Activated T-helper 1 cell treated with anti-CD3 and anti-CD28 coated beads, Interleukin-12 subunit alpha, Interleukin-12 subunit beta, Interleukin-2, Interleukin-4 antibody, amounts not matched to agents 30 ng/mL and 10 ng/mL and 1 ng/mL, durations not matched to agents 14 hours and 24 hours and 36 hours (primary cell): ENCODE measurements at regions of chr9 and their contacts with region 1.

Region 1: GRCh38 chr9:19048966-19049916 is at the start of gene RRAGA:
- DNase-seq: peak; percentile 92
- H3K4me3 Mint-ChIP-seq: peak within 1 kb of the TSS; percentile 96
- H3K27ac Mint-ChIP-seq: peak within 1 kb of the TSS; percentile 99
- H3K4me1 Mint-ChIP-seq: peaks cover 43% of the 10 kb centered on the region
- H3K27me3 Mint-ChIP-seq: peaks cover under 1% of the 10 kb centered on the region
- total RNA-seq, gene RRAGA: 56.8 and 56.9 TPM in 2 replicates

Region 2: DNA sequence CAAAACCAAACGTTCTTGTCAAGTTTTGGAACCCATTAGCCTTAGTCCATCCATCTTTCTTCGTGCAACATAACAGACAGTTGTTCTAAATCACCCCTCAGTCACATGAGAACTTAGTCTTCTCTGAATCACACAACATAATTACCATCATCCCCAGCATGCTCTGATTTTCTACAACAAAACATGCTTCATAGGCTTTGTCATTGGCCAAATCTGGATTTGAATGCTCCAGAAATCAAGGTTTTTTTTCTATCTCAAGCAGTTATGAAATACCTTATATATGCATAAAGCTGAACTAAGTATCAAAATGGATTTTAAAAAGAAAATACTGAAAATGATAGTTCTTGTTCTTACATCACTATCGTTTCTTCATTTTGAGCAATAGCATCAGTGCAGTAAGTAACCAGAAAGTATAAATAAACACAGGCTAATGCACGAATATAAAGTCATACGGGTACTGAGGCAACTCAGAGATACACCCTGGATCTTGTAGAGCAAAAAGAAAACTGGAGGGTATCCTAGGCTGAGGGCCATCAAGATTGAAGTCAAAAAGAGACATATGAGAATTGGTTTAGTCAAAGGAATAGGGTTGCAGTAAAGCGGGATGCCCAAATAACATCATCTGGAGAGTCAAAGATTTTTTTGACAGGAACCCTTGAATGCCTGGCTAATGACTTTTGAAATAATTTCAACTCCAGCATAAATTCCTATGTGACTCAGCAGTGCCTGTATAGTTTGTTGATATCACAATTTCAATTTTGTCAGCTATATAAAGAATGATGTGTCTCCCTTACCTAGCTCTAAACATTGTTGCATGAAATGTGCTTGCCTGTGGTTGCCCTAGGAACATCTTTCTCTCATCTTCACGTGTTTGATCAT is 410.6 kb before region 1 on chr9:
- intact Hi-C with region 1: no loop called
- DNase-seq: no peak
- H3K4me3 Mint-ChIP-seq: no peak overlapping the region
- H3K27ac Mint-ChIP-seq: no peak overlapping the region
- H3K4me1 Mint-ChIP-seq: no peaks in the 10 kb centered on the region
- H3K27me3 Mint-ChIP-seq: no peaks in the 10 kb centered on the region

Region 3: DNA sequence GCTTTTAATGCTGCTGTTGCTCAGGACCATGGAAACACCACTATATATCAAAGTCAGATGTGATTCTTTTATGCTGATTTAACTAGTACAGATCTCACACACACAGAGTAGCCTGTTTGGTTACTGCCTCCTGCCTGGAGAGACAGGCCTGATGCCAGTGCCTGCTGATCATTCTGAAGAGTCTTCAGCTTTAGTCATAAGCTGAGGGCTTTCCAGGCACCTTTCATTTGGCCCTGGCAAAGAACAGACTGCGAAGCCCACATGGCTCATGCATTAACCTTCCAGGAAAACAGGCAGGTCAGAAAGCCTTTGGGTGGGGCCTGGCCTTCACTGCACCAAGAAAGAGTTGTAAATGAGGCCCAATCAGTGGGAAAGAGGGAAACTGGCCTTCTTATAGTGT is 161.0 kb before region 1 on chr9:
- intact Hi-C with region 1: no loop called
- DNase-seq: no peak
- H3K4me3 Mint-ChIP-seq: no peak overlapping the region
- H3K27ac Mint-ChIP-seq: no peak overlapping the region
- H3K4me1 Mint-ChIP-seq: peaks cover 8% of the 10 kb centered on the region
- H3K27me3 Mint-ChIP-seq: peaks cover 8% of the 10 kb centered on the region

Region 4: GRCh38 chr9:19036611-19037010 is 12.6 kb before region 1 on chr9:
- intact Hi-C with region 1: no loop called
- DNase-seq: no peak
- H3K4me3 Mint-ChIP-seq: no peak overlapping the region
- H3K27ac Mint-ChIP-seq: no peak overlapping the region
- H3K4me1 Mint-ChIP-seq: no peaks in the 10 kb centered on the region
- H3K27me3 Mint-ChIP-seq: peaks cover 5% of the 10 kb centered on the region

Region 5: GRCh38 chr9:19102631-19103345 is 53.5 kb after region 1 on chr9 and contains the start of gene HAUS6:
- intact Hi-C with region 1: loop called (anchors 1 kb)
- DNase-seq: peak; percentile 92
- H3K4me3 Mint-ChIP-seq: peak within 1 kb of the TSS; percentile 94
- H3K27ac Mint-ChIP-seq: peak within 1 kb of the TSS; percentile 96
- H3K4me1 Mint-ChIP-seq: peaks cover 16% of the 10 kb centered on the region
- H3K27me3 Mint-ChIP-seq: no peaks in the 10 kb centered on the region
- total RNA-seq, gene HAUS6: 31.8 and 31.9 TPM in 2 replicates

Region 6: DNA sequence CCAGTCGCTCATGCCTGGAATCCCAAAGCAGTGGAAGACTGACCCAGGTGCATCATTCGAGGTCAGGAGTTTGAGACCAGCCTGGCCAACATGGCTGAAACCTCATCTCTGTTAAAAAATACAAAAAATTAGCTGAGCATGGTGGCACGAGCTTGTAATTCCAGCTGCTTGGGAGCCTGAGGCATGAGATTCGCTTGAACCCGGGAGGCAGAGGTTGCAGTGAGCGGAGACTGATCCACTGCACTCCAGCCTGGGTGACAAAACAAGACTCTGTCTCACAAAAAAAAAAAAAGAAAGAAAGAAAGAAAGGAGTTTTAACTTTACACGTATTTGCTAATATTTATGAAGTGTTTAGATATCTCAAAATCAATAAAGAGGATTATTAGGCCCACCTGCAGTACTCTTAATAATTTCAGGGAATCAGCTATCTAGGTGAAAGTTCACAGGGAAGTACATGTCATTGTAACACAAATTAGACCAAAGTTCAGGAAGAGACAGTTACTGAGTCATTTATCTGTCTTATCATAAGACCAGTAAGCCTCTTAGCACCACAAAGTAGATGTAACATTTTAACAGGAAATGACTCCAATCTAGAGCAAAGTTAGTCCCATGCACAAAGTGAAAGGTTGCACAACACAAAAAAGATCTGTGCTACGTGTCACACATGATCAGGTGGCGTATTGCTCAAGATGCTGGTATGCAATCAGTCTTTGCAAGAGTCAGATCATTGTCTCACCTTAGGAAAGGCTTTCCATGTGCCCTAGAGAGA is 112.2 kb after region 1 on chr9:
- intact Hi-C with region 1: loop called (anchors 1 kb)
- DNase-seq: peak; percentile 60
- H3K4me3 Mint-ChIP-seq: peak overlapping the region; percentile 48
- H3K27ac Mint-ChIP-seq: peak overlapping the region; percentile 95
- H3K4me1 Mint-ChIP-seq: peaks cover 19% of the 10 kb centered on the region
- H3K27me3 Mint-ChIP-seq: no peaks in the 10 kb centered on the region

Region 7: DNA sequence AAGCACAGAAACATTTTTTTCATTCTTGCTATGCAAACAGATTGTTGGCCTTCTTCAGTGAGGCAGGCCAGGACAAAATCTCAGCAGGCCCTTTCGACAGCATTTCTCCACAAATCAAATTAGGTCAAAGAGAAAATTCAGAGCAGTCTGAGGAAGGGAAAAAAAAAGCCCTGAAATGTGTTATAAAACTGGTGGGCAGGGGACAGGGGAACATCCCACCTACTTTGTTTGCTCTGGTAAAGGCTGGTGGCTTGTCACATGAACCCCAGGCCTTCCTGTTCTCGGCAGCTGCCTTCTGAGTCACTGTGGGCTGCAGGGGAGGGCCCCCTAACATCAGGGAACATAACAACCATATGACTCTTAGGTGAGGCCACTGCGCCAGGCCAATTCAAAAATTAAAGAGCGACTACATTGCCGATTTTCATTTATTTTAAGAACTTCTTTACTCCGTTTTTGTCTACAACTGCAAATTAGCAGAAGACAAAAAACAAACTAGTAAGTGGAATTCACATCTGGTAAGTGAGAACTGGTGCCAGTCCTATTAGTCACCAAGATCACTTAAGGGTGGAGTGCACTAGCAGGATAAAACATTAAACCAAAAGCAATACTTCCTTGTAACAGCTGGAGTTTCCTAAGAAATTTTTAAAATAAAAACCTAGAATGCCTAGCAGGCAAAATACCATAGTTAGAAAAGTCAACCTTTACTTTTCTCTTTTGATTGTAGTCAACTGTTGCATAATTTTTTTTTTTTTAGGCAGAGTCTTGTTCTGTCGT is 135.1 kb after region 1 on chr9:
- intact Hi-C with region 1: loop called (anchors 1 kb)
- DNase-seq: peak; percentile 72
- H3K4me3 Mint-ChIP-seq: peak overlapping the region; percentile 67
- H3K27ac Mint-ChIP-seq: peak overlapping the region; percentile 89
- H3K4me1 Mint-ChIP-seq: peaks cover 18% of the 10 kb centered on the region
- H3K27me3 Mint-ChIP-seq: no peaks in the 10 kb centered on the region

Region 8: GRCh38 chr9:19379697-19380046 is 330.4 kb after region 1 on chr9:
- intact Hi-C with region 1: loop called (anchors 1 kb)
- DNase-seq: no peak
- H3K4me3 Mint-ChIP-seq: peak overlapping the region; percentile 98
- H3K27ac Mint-ChIP-seq: peak overlapping the region; percentile 98
- H3K4me1 Mint-ChIP-seq: peaks cover 61% of the 10 kb centered on the region
- H3K27me3 Mint-ChIP-seq: no peaks in the 10 kb centered on the region

Region 9: DNA sequence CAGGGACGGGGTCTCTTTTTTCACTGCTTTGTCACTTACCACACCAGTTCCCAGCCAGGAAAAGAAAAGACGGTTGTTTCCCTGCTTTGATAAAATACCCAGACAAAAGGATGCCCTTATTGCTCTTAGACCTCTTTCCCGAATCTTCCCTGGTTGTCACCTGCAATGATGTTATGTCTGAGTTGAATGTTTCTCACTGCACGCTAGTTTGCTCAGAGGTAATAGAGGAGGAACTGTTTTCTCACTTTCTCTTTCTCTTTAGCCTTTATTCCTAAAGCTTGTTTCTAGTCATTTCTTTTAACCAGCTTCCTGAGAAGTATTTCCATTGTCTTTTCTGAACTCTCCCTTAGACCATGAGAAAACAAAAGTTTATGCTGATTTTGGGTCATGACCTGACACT is 392.5 kb after region 1 on chr9:
- intact Hi-C with region 1: loop called (anchors 1 kb)
- DNase-seq: no peak
- H3K4me3 Mint-ChIP-seq: peak overlapping the region; percentile 48
- H3K27ac Mint-ChIP-seq: peak overlapping the region; percentile 80
- H3K4me1 Mint-ChIP-seq: peaks cover 14% of the 10 kb centered on the region
- H3K27me3 Mint-ChIP-seq: no peaks in the 10 kb centered on the region